Activated T-helper 1 cell treated with anti-CD3 and anti-CD28 coated beads, Interleukin-12 subunit alpha, Interleukin-12 subunit beta, Interleukin-2, Interleukin-4 antibody, amounts not matched to agents 30 ng/mL and 10 ng/mL and 1 ng/mL, durations not matched to agents 14 hours and 24 hours and 36 hours (primary cell): ENCODE measurements at regions of chr6 and their contacts with region 1.

Region 1: GRCh38 chr6:89098461-89098860 is 17.9 kb downstream of the PNRC1 start:
- DNase-seq: no peak
- H3K4me3 Mint-ChIP-seq: no peak overlapping the region
- H3K27ac Mint-ChIP-seq: no peak overlapping the region
- H3K4me1 Mint-ChIP-seq: peaks cover 7% of the 10 kb centered on the region
- H3K27me3 Mint-ChIP-seq: no peaks in the 10 kb centered on the region

Region 2: GRCh38 chr6:89026151-89026550 is 72.3 kb before region 1 on chr6:
- intact Hi-C with region 1: loop called (anchors 2 kb)
- DNase-seq: no peak
- H3K4me3 Mint-ChIP-seq: no peak overlapping the region
- H3K27ac Mint-ChIP-seq: no peak overlapping the region
- H3K4me1 Mint-ChIP-seq: no peaks in the 10 kb centered on the region
- H3K27me3 Mint-ChIP-seq: peaks cover 4% of the 10 kb centered on the region